ENCODE measurements at regions of chr16 and their contacts with region 1.

Region 1: DNA sequence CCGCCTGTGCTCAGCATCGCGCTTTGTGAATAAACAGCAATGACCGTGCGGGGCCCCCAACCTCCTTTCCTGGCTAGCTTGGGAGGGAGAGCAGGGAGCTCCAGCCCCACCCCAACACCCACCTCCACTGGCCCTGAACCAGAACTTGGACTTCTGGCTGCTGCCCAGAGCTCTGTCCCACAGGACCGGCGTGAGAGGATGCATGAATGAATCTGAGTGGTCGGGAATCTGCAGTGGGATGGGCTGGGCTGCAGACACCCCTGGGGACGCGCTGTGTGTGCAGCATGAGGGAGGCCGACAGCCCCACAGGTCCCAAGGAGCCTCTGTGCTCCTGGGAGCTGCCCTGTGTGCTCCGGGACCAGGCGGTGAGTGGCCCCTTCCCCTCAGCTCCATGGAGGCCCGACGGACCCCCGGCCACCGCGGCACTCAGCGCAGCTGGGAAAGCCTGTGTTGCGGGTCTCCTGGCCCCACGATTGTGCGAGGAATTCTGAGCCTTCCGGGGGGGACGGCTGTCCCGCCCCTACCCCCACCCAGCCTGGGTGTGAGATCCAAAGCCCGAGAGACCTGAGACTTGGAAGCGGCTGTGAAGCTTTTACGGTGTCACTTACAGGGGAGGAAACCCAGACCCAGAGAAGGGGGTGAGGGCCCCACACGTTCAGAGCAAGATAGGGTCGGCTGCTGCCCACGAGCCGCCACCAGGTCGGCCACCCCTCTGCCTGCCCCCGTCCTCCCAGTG is 5.4 kb downstream of the PIEZO1 start:
- DNase-seq: no peak
- H3K4me3 ChIP-seq: no peak overlapping the region
- H3K27ac ChIP-seq: no peak overlapping the region
- H3K4me1 ChIP-seq: peaks cover 2 to 21% (median 10%) of the 10 kb centered on the region in 4 experiments
- H3K27me3 ChIP-seq: no peaks in the 10 kb centered on the region
- CTCF ChIP-seq: no peak
- EP300 ChIP-seq: no peak
- POLR2A ChIP-seq: no peak
- RAD21 ChIP-seq: no peak

Region 2: GRCh38 chr16:88743693-88744576 is 35.6 kb before region 1 on chr16:
- CTCF ChIA-PET with region 1: interaction called, 10 read pairs
- POLR2A ChIA-PET with region 1: no interaction called
- DNase-seq: peak; percentile 39 to 98
- H3K4me3 ChIP-seq: no peak overlapping the region
- H3K27ac ChIP-seq: no peak overlapping the region
- H3K4me1 ChIP-seq: peaks cover 0 to 11% (median 6%) of the 10 kb centered on the region in 4 experiments; a peak in 4 of 7 replicates
- H3K27me3 ChIP-seq: no peaks in the 10 kb centered on the region
- CTCF ChIP-seq: peak; percentile 81 to 96 (median 93)
- EP300 ChIP-seq: no peak
- POLR2A ChIP-seq: no peak
- RAD21 ChIP-seq: peak; percentile 44 to 51

Region 3: DNA sequence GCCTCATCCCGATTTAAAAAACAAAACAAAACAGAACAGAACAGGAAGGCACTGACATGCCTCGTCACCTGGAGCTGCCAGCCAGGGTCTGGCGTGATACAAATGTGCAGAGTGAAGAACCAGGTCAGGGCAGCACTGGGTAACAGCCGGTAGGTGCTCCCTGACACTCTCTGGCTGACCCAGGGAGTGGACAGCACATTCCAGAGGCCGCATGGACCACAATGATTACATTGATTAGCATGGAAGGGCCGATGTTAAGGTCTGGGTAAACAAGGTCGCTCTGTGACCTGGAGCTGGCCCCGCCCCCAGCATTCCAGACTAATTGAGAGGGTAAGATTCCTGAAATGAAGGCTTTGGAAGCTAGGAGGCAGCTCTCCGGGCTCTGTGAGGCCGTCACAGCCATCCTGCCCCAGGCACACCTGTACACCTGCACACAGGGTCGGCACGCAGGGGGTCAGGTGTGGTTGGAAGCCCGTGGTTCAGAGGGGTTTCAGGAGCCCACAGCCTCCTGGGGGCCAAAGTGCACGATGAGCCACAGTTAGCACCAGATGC is 16.0 kb before region 1 on chr16:
- CTCF ChIA-PET with region 1: interaction called, 94 read pairs
- POLR2A ChIA-PET with region 1: interaction called, 22 read pairs
- DNase-seq: peak in 1 of 2 experiments; percentile 85
- H3K4me3 ChIP-seq: peak overlapping the region in 1 of 4 experiments; percentile 3; a peak in 1 of 8 replicates
- H3K27ac ChIP-seq: peak overlapping the region; percentile 64
- H3K4me1 ChIP-seq: peaks cover 4 to 43% (median 34%) of the 10 kb centered on the region in 4 experiments
- H3K27me3 ChIP-seq: no peaks in the 10 kb centered on the region
- CTCF ChIP-seq: peak in 1 of 3 experiments; percentile 40; a peak in 1 of 4 replicates
- EP300 ChIP-seq: no peak
- POLR2A ChIP-seq: no peak
- RAD21 ChIP-seq: no peak; a peak in 2 of 4 replicates

Measured in H1 (cell line).